ENCODE measurements at regions of chr2 and their contacts with region 1.

Region 1: GRCh38 chr2:204753841-204754240 is 208.6 kb downstream of the PARD3B start:
- DNase-seq: no peak
- CTCF ChIP-seq: no peak

Region 2: DNA sequence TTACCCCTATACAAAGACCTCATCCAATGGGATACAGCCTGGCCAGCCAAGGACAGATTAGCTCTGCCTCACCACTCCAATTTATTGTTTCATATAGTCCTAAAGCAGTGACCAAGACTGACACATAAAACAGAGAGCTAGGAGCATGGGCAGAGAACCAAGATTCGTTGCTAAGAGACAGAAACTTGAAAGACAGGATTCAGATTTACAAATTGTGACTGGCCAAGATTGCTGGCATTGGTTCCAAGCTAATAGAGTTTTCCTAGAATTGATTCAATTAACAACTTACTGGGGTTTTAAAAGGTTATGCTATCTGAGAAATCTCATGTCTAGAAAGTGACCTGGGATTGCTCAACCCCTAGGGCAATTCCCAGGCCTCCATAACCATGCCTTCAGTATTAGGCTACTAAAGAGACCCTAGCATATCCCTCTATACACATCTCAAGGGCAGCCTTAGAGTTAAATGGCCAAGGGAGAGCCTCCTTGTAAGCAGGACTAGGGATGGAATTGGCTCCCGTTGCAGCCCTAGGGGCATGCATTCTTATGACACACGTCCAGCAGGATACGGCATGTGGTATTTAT is 741.7 kb before region 1 on chr2:
- CTCF ChIA-PET with region 1: no interaction called
- POLR2A ChIA-PET with region 1: no interaction called
- DNase-seq: no peak
- CTCF ChIP-seq: no peak

Region 3: DNA sequence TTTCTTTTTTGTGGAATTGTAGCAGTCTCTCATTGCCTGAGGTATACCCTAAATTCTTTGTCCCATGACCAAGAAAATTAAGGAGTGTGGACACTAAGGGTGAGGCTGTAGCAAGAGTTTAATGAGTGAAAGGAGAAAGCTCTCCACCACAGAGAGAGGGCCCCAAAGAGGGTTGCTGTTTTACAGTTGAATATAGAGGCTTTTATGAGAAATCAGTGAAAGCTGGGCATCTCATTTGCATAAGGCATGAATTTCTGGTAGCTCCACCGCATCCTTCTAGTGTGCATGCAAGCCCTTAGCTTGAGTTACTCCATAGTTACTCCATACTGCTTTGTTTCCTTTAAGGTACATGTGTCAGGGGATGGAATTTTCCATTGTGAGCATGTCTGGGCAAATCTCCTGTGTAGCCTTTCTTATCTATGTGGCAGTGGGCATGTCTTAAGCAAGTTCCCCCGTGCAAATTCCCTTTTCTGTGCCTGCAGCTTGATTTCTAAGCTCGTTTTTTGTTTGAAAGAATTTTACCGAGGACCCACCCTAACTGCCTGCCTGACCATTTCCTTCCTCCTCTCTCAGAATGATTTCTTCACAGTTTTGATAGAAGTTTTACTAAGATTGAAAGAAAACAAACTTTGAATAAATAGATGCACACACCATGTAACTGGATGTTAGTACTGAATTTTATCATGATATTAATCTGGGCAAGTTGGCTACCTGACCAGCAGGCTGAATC is 10.3 kb after region 1 on chr2:
- CTCF ChIA-PET with region 1: interaction called, 15 read pairs
- POLR2A ChIA-PET with region 1: no interaction called
- DNase-seq: no peak
- CTCF ChIP-seq: no peak

Measured in GM10248 (cell line).